GM13976 (cell line): ENCODE measurements at regions of chr13 and their contacts with region 1.

Region 1: GRCh38 chr13:111202745-111203144 is 87.6 kb downstream of the ARHGEF7 start:
- DNase-seq: peak; percentile 80
- CTCF ChIP-seq: no peak

Region 2: GRCh38 chr13:110915057-110915873 is 287.5 kb before region 1 on chr13 and contains the start of gene ANKRD10:
- in situ Hi-C with region 1: loop called (anchors 25 kb)
- DNase-seq: peak; percentile 99
- CTCF ChIP-seq: peak; percentile 86

Region 3: GRCh38 chr13:111076156-111077013 is 126.4 kb before region 1 on chr13:
- in situ Hi-C with region 1: no loop called
- DNase-seq: no peak
- CTCF ChIP-seq: no peak

Region 4: GRCh38 chr13:111241006-111241755 is 38.4 kb after region 1 on chr13:
- in situ Hi-C with region 1: no loop called
- DNase-seq: no peak
- CTCF ChIP-seq: no peak